MCF 10A (cell line): ENCODE measurements at regions of chr12 and their contacts with region 1.

Region 1: DNA sequence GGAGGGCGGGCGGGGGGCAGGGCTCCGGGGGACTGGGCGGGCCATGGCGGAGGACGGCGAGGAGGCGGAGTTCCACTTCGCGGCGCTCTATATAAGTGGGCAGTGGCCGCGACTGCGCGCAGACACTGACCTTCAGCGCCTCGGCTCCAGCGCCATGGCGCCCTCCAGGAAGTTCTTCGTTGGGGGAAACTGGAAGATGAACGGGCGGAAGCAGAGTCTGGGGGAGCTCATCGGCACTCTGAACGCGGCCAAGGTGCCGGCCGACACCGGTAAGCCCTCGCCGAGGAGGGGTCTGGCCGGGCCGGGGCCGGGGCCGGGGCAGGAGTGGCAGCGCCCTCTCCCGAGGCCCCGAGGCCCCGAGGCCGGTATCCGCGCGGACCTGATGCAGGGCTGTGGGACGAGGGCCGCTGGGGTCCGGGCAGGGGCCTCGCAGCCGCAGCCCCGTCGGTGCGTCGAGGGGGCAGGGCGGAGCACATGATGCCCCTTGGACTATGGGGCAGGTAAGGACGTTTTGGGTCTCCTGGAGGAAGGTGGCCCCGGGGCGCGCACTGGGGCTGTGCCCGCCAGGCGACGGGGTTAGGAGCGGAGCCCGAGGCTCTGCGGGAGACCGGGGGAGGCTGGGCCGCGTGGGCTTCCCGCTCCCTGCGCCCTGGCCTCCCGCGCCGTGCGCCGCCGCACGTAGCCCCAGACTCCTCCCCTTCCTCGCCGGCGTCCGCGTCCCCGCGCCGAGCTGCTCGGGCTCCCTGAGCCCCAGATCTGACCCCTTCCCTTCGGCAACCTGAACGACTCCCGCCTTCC is at the start of gene TPI1:
- DNase-seq: peak; percentile 70
- H3K4me3 Mint-ChIP-seq: peak within 1 kb of the TSS; percentile 86
- H3K27ac Mint-ChIP-seq: peak within 1 kb of the TSS; percentile 82
- H3K4me1 Mint-ChIP-seq: peaks cover 30% of the 10 kb centered on the region
- H3K27me3 Mint-ChIP-seq: no peaks in the 10 kb centered on the region
- CTCF ChIP-seq: no peak
- total RNA-seq, gene TPI1: 498 and 549 TPM in 2 replicates

Region 2: DNA sequence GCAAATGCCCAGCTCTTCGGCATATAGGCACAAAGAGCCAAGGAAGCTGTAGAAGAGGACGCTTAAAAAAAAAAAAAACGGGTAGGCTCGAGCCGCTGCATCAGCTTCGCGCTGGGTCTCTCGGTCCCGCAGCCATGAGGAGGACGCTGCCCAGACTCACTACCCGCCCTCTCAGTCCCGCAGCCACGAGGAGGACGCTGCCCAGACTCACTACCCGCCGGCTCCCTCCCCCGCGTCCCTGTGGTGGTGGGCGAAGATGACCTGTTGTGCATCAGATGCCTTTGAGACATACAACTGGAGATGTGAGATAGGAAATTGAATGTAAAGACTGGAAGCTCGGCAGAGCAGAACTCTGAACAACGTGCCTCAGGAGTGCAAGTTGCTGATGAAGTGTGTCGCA is 16.9 kb after region 1 on chr12:
- CTCF ChIA-PET with region 1: interaction called, 22 read pairs
- POLR2A ChIA-PET with region 1: interaction called, 14 read pairs
- intact Hi-C with region 1: no loop called
- DNase-seq: no peak
- H3K4me3 Mint-ChIP-seq: no peak overlapping the region
- H3K27ac Mint-ChIP-seq: no peak overlapping the region
- H3K4me1 Mint-ChIP-seq: no peaks in the 10 kb centered on the region
- H3K27me3 Mint-ChIP-seq: no peaks in the 10 kb centered on the region
- CTCF ChIP-seq: no peak

Region 3: DNA sequence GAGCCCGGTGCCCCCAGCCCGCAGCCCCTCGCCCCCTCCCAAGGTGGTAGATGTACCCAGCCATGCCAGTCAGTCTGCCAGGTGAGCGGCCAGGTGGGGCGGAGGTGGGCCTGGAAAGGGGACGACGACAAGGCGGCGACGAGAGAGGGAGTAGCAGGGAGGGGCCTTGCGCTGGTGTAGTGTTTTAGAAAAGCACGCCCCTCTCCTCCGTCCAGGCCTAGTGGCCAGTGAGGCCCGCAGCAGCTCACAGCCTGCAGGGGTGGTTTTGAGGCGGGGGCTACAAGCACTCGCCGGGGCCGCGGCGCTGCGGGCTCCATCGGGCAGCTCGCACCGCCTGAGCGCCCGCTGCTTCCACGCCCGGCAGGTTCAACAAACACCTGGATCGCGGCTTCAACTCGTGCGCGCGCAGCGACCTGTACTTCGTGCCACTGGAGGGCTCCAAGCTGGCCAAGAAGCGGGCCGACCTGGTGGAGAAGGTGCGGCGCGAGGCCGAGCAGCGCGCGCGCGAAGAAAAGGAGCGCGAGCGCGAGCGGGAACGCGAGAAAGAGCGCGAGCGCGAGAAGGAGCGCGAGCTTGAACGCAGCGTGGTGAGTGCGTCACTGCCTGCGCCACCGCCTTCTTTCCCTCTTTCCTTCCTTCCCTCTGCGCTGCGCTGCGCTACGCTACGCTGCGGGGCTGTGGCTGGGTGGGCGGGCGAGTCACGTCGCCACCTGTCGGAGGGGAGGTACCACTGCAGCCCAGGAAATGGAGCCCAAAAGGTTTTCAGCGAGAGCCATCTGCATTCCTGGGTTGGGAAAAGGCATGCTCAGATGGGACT is 70.1 kb after region 1 on chr12:
- CTCF ChIA-PET with region 1: interaction called, 13 read pairs
- POLR2A ChIA-PET with region 1: interaction called, 62 read pairs
- intact Hi-C with region 1: loop called (anchors 2 kb)
- DNase-seq: peak; percentile 94
- H3K4me3 Mint-ChIP-seq: peak overlapping the region; percentile 71
- H3K27ac Mint-ChIP-seq: peak overlapping the region; percentile 52
- H3K4me1 Mint-ChIP-seq: peaks cover 31% of the 10 kb centered on the region
- H3K27me3 Mint-ChIP-seq: no peaks in the 10 kb centered on the region
- CTCF ChIP-seq: peak; percentile 88